Common myeloid progenitor, CD34-positive (primary cell): ENCODE measurements at regions of chr10 and their contacts with region 1.

Region 1: GRCh38 chr10:73931767-73932619 is 21.1 kb downstream of the PLAU start:
- DNase-seq: peak; percentile 72 to 87 (median 83)
- H3K4me3 ChIP-seq: peak overlapping the region in 2 of 7 experiments; percentile 4 to 40
- H3K27ac ChIP-seq: peak overlapping the region in 1 of 2 experiments; percentile 32
- H3K4me1 ChIP-seq: peaks cover 0 to 24% (median 13%) of the 10 kb centered on the region in 4 experiments
- H3K27me3 ChIP-seq: no peaks in the 10 kb centered on the region

Region 2: DNA sequence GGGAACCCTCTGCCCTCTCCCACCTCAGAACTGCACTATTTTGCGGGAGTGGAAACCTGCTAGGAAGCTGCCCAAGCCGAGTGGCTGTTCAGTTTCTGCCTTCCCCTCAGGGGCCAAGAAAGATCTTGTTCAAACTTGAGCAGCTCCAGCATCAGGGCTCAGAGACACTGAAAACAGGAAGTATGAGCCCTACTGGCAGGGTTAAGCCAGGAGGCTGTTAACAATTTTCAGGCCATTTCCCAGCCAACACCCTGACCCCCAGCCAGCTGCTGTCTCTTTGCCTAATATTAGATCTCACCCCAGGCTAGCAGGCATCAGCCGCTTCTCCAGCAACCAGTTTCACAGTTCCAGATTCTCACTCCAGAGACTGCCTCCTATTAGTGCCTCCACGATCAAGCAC is 11.9 kb before region 1 on chr10:
- CTCF ChIA-PET with region 1: interaction called, 11 read pairs
- POLR2A ChIA-PET with region 1: no interaction called
- DNase-seq: peak in 2 of 3 donors; percentile 68 to 74
- H3K4me3 ChIP-seq: no peak overlapping the region
- H3K27ac ChIP-seq: peak overlapping the region in 1 of 2 experiments; percentile 58
- H3K4me1 ChIP-seq: peaks cover 0 to 10% (median 2%) of the 10 kb centered on the region in 4 experiments
- H3K27me3 ChIP-seq: no peaks in the 10 kb centered on the region